Naive thymus-derived CD4-positive, alpha-beta T cell (primary cell): ENCODE measurements at regions of chr17 and their contacts with region 1.

Region 1: GRCh38 chr17:48194097-48194550 is 86.6 kb downstream of the SNX11 start:
- DNase-seq: peak in 6 of 9 donors; percentile 6 to 42 (median 22)
- ATAC-seq: peak; percentile 84
- H3K4me3 ChIP-seq: no peak overlapping the region
- H3K4me3 Mint-ChIP-seq: peak overlapping the region; percentile 11 to 66 (median 45)
- H3K27ac ChIP-seq: no peak overlapping the region
- H3K27ac Mint-ChIP-seq: peak overlapping the region; percentile 3 to 83 (median 63)
- H3K4me1 ChIP-seq: peaks cover 15 to 16% of the 10 kb centered on the region in 2 donors
- H3K4me1 Mint-ChIP-seq: peaks cover 29 to 58% (median 48%) of the 10 kb centered on the region in 7 donors
- H3K27me3 ChIP-seq: no peaks in the 10 kb centered on the region
- H3K27me3 Mint-ChIP-seq: no peaks in the 10 kb centered on the region

Region 2: GRCh38 chr17:48213797-48214196 is 19.7 kb after region 1 on chr17:
- CTCF ChIA-PET with region 1: no interaction called
- POLR2A ChIA-PET with region 1: no interaction called
- intact Hi-C with region 1: loop called in 1 of 2 experiments (anchors 2 kb)
- DNase-seq: no peak
- ATAC-seq: no peak
- H3K4me3 ChIP-seq: no peak overlapping the region
- H3K4me3 Mint-ChIP-seq: no peak overlapping the region
- H3K27ac ChIP-seq: no peak overlapping the region
- H3K27ac Mint-ChIP-seq: peak overlapping the region in 5 of 9 donors; percentile 2 to 59 (median 19)
- H3K4me1 ChIP-seq: no peaks in the 10 kb centered on the region
- H3K4me1 Mint-ChIP-seq: peaks cover 7 to 41% (median 29%) of the 10 kb centered on the region in 7 donors
- H3K27me3 ChIP-seq: no peaks in the 10 kb centered on the region
- H3K27me3 Mint-ChIP-seq: no peaks in the 10 kb centered on the region